ENCODE measurements at regions of chr9 and their contacts with region 1.

Region 1: DNA sequence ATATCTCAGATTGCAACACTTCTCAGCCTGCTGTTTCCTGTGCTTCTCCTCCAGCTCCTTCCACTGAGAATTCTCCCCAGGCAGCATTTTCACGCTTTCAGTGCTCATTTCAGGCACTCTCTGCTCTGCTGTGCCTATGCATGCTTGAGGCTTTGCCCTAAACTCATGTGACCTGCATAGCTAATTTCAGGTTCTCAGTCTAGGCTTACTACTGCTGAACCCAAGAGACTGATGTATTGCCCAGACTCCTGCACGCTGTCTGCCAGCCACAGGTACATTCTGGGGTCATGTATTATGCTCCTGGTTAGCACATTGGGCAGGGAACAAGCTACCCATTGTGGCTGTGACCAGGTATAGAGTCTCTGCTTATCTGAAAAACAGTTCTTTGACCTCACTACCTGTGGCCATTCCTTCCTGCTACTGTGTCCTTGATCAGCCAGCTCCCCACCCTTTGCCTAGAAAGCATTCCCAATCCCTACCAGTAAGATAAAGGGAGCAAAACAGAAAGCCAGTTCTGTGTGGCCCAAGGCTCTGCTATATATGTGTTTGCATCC is 34.7 kb downstream of the PIP5K1B start:
- DNase-seq: no peak
- ATAC-seq: no peak; the same call in 1 of the 2 replicates
- H3K4me3 ChIP-seq: no peak overlapping the region
- H3K27ac ChIP-seq: no peak overlapping the region
- H3K4me1 ChIP-seq: peaks cover 16% of the 10 kb centered on the region
- H3K27me3 ChIP-seq: 0 out of 2 replicates have a peak, but pooled peaks cover under 1% of the 10 kb centered on the region
- CTCF ChIP-seq: no peak

Region 2: DNA sequence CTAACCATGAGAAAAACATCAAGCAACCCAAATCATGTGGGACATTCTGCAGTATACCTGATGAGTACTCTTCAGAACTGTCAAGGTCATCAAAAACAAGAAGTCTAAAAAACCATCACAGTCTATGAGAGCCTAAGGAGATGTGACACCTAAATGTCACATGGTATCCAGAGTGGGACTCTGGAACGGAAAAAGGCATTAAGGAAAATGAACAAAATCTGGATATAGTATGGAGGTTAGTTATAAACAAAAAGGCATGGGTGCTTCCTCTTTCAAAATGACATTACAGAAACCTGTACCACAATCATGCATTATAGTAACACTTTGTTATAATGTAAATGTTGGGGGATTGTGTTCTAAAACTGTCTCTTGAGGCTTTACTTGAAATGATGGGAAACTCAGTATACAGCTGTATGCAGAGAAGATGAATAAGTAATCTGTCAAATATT is 226.8 kb after region 1 on chr9:
- CTCF ChIA-PET with region 1: no interaction called
- POLR2A ChIA-PET with region 1: no interaction called
- intact Hi-C with region 1: loop called (anchors 10 kb)
- DNase-seq: no peak
- ATAC-seq: no peak
- H3K4me3 ChIP-seq: no peak overlapping the region
- H3K27ac ChIP-seq: no peak overlapping the region
- H3K4me1 ChIP-seq: peaks cover 15% of the 10 kb centered on the region
- H3K27me3 ChIP-seq: peaks cover 13% of the 10 kb centered on the region
- CTCF ChIP-seq: no peak

Measured in PC-3 (cell line).